ENCODE measurements at regions of chr5 and their contacts with region 1.

Region 1: DNA sequence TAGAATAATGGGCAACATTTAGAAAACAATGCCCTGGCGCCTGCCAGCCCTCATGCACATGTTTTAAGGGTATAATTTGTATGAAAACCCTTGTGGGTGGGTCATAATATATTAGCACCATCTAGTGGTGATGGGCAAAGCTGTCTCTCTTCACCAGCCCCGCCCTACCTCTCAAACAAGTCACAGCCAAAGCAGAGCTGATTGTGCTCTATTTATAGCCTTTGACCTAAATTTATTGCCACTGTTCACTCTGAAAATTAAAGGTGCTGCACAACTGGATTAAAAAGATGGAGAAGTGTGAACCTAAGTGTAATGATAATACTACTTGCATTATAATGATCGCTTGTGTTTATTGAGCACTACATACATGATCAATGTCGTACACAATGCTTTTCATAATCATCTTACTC is 131.9 kb upstream of the ANKH start:
- DNase-seq: peak; percentile 30
- H3K4me3 Mint-ChIP-seq: no peak overlapping the region
- H3K27ac Mint-ChIP-seq: no peak overlapping the region
- H3K4me1 Mint-ChIP-seq: peaks cover 18% of the 10 kb centered on the region
- H3K27me3 Mint-ChIP-seq: peaks cover 35% of the 10 kb centered on the region

Region 2: DNA sequence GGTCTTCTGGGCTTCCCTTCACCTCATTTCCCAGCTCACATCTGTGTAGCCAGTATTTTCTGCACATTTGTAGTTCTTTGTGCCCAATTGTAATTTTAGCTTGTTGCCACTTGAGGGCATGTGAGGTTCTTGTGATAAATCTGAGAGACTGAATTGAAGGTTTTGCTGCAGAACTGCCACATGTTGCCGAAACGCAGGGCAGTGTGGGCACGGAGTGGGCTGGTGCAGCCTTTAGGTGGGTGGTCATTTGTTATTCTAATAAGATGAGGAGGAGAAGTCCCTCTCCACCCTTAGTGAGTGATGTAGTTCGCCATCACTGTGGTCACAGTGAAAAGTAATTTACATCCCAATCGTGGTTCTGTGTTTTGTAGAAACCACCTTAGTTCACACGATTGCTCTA is 317.8 kb before region 1 on chr5:
- intact Hi-C with region 1: loop called (anchors 1 kb)
- DNase-seq: peak; percentile 21
- H3K4me3 Mint-ChIP-seq: no peak overlapping the region
- H3K27ac Mint-ChIP-seq: peak overlapping the region; percentile 48
- H3K4me1 Mint-ChIP-seq: peaks cover 16% of the 10 kb centered on the region
- H3K27me3 Mint-ChIP-seq: no peaks in the 10 kb centered on the region

Region 3: DNA sequence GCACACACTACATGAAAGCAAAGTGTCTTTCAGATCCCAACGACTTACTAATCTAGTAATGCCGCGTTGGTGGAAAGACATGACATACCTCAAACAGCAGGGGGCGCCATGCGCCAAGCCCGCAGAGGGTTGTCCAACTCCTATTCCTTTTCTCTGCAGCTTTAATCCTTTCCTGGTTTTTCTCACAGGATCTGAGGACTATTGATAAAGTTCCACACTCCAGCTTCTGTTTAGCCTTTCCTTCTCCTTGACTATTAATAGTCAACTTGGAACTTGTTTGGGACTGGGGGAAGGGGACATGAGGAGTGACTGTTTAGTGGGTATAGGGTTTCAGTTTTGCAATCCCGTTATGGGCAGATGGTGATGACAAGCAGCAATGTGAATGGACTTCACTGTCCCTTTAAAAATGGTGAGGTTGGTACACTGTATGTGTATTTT is 276.1 kb before region 1 on chr5:
- intact Hi-C with region 1: loop called (anchors 1 kb)
- DNase-seq: peak; percentile 57
- H3K4me3 Mint-ChIP-seq: no peak overlapping the region
- H3K27ac Mint-ChIP-seq: no peak overlapping the region
- H3K4me1 Mint-ChIP-seq: peaks cover 2% of the 10 kb centered on the region
- H3K27me3 Mint-ChIP-seq: no peaks in the 10 kb centered on the region

Region 4: DNA sequence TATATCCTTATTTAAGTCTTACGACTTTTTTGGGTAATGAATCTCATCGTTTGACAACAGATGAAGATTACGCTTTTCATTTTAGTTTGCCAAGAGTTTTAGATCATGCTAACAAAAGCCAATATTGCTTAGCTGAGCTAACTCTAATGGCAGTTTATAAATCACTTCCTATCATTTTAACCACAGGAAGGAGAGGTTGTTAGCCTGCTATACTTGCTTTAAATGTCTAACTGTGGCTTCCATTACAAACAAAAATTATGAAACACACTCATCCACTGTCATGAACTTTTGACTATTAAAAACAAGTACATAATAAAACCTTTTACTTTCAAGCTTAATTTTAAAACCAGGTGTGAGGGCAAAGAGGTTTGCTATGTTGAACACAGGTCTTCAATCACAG is 78.2 kb before region 1 on chr5:
- intact Hi-C with region 1: loop called (anchors 5 kb)
- DNase-seq: no peak
- H3K4me3 Mint-ChIP-seq: peak overlapping the region; percentile 45
- H3K27ac Mint-ChIP-seq: peak overlapping the region; percentile 87
- H3K4me1 Mint-ChIP-seq: peaks cover 50% of the 10 kb centered on the region
- H3K27me3 Mint-ChIP-seq: no peaks in the 10 kb centered on the region